CD8-positive, alpha-beta T cell (primary cell): ENCODE measurements at regions of chr18 and their contacts with region 1.

Region 1: GRCh38 chr18:62584241-62585120 is 61.7 kb downstream of the ZCCHC2 start:
- DNase-seq: peak; percentile 62 to 91 (median 83)
- ATAC-seq: peak; percentile 99
- H3K4me3 ChIP-seq: no peak overlapping the region
- H3K4me3 Mint-ChIP-seq: peak overlapping the region; percentile 33
- H3K27ac ChIP-seq: peak overlapping the region in 1 of 2 experiments; percentile 30
- H3K27ac Mint-ChIP-seq: peak overlapping the region; percentile 39
- H3K4me1 ChIP-seq: peaks cover 16% of the 10 kb centered on the region
- H3K4me1 Mint-ChIP-seq: peaks cover 29% of the 10 kb centered on the region
- H3K27me3 ChIP-seq: no peaks in the 10 kb centered on the region
- H3K27me3 Mint-ChIP-seq: no peaks in the 10 kb centered on the region
- CTCF ChIP-seq: peak; percentile 98

Region 2: DNA sequence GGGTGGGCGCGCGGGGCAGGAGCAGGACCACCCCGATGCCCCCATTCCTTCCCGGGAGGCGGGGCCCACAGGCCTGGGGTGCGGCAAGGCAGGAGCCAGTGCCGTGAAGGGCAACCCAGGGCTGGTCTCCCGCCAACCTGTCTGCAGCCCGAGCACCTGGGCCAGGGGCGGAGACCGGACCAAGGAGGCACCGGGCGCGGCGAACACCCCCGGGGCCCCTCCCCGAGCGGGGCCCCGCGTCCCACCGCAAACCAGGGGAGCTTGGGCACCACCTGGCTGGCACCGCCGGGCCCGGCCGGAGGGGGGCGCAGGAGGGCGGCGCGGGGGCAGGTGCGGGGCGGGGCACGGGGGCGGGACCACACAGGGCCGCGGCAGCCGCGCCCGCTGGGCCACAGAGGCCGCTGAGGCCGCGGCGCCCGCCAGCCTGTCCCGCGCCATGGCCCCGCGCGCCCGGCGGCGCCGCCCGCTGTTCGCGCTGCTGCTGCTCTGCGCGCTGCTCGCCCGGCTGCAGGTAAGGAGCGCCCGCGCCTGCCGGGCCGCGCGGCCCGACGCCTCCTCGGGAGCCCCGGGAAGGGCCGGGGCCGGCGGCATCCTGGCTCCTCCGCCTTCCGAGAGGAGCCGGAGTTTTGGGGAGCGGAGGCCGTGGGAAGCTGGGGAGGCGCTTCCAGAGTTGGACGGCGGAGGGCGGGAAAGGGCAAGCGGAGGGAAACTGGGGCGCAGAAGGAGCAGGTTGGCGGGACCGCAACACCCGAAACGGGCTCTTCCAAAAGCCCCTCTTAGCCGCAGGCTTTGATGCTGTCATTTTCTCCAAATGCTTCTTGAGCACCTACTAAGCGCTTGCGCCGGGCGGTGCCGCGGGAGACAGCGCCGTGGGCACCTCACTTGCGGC is 259.3 kb before region 1 on chr18 and contains the start of gene TNFRSF11A:
- CTCF ChIA-PET with region 1: no interaction called
- POLR2A ChIA-PET with region 1: no interaction called
- intact Hi-C with region 1: loop called (anchors 2 to 5 kb)
- DNase-seq: peak; percentile 35 to 69 (median 61)
- ATAC-seq: peak; percentile 90
- H3K4me3 ChIP-seq: peak within 1 kb of the TSS; percentile 45 to 51
- H3K4me3 Mint-ChIP-seq: peak within 1 kb of the TSS; percentile 80
- H3K27ac ChIP-seq: no peak within 1 kb of the TSS
- H3K27ac Mint-ChIP-seq: no peak within 1 kb of the TSS
- H3K4me1 ChIP-seq: peaks cover 24% of the 10 kb centered on the region
- H3K4me1 Mint-ChIP-seq: peaks cover 26% of the 10 kb centered on the region
- H3K27me3 ChIP-seq: peaks cover 25 to 27% of the 10 kb centered on the region in 2 experiments
- H3K27me3 Mint-ChIP-seq: peaks cover 71% of the 10 kb centered on the region
- CTCF ChIP-seq: peak; percentile 25
- total RNA-seq, gene TNFRSF11A: 0.03 to 0.28 TPM

Region 3: GRCh38 chr18:62445386-62445917 is 139.0 kb before region 1 on chr18:
- CTCF ChIA-PET with region 1: interaction called, 5 read pairs
- POLR2A ChIA-PET with region 1: no interaction called
- intact Hi-C with region 1: loop called (anchors 1 to 5 kb)
- DNase-seq: no peak
- ATAC-seq: no peak
- H3K4me3 ChIP-seq: no peak overlapping the region
- H3K4me3 Mint-ChIP-seq: no peak overlapping the region
- H3K27ac ChIP-seq: no peak overlapping the region
- H3K27ac Mint-ChIP-seq: no peak overlapping the region
- H3K4me1 ChIP-seq: no peaks in the 10 kb centered on the region
- H3K4me1 Mint-ChIP-seq: no peaks in the 10 kb centered on the region
- H3K27me3 ChIP-seq: no peaks in the 10 kb centered on the region
- H3K27me3 Mint-ChIP-seq: peaks cover 3% of the 10 kb centered on the region
- CTCF ChIP-seq: no peak

Region 4: GRCh38 chr18:62455222-62455621 is 129.3 kb before region 1 on chr18:
- CTCF ChIA-PET with region 1: interaction called, 12 read pairs
- POLR2A ChIA-PET with region 1: no interaction called
- intact Hi-C with region 1: no loop called
- DNase-seq: no peak
- ATAC-seq: no peak
- H3K4me3 ChIP-seq: no peak overlapping the region
- H3K4me3 Mint-ChIP-seq: no peak overlapping the region
- H3K27ac ChIP-seq: no peak overlapping the region
- H3K27ac Mint-ChIP-seq: no peak overlapping the region
- H3K4me1 ChIP-seq: no peaks in the 10 kb centered on the region
- H3K4me1 Mint-ChIP-seq: no peaks in the 10 kb centered on the region
- H3K27me3 ChIP-seq: no peaks in the 10 kb centered on the region
- H3K27me3 Mint-ChIP-seq: peaks cover 20% of the 10 kb centered on the region
- CTCF ChIP-seq: no peak

Region 5: GRCh38 chr18:62571648-62572047 is 12.8 kb before region 1 on chr18:
- CTCF ChIA-PET with region 1: interaction called, 16 read pairs
- POLR2A ChIA-PET with region 1: no interaction called
- intact Hi-C with region 1: no loop called
- DNase-seq: peak in 1 of 9 experiments; percentile 23
- ATAC-seq: no peak
- H3K4me3 ChIP-seq: no peak overlapping the region
- H3K4me3 Mint-ChIP-seq: no peak overlapping the region
- H3K27ac ChIP-seq: no peak overlapping the region
- H3K27ac Mint-ChIP-seq: no peak overlapping the region
- H3K4me1 ChIP-seq: no peaks in the 10 kb centered on the region
- H3K4me1 Mint-ChIP-seq: no peaks in the 10 kb centered on the region
- H3K27me3 ChIP-seq: no peaks in the 10 kb centered on the region
- H3K27me3 Mint-ChIP-seq: no peaks in the 10 kb centered on the region
- CTCF ChIP-seq: no peak

Region 6: DNA sequence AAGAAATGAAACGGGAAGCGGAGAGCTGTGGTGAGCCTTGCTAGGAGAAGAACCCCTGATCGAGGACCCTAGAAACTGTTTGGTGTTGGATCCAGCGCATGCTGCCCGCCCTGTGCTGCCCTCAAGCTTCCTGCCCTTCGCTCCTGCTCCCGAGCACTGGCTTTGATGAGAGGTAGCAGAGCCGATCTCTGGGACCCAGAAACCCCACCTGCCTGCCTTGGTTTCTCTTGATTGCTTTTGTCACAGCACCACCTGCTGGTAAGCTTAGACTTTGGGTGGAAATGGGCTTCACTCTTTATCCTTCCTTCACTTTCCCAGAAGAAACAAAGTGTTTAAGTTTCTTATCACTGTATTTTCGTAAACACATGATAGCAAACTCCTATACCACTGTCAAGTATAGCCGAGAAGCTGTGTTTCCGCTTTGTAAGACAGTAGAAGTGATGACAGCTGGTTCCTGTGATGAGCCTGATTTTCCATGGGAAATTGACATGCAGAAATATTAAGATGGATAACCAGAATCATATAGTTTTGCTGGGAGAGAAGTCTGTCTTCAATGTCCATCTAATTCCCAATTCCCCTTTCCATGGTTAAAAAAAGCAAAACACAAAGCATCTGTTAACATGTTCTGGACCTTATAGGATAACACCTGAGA is 398.2 kb after region 1 on chr18:
- CTCF ChIA-PET with region 1: interaction called, 24 read pairs
- POLR2A ChIA-PET with region 1: no interaction called
- intact Hi-C with region 1: loop called (anchors 1 to 2 kb)
- DNase-seq: peak; percentile 25 to 77 (median 57)
- ATAC-seq: peak; percentile 65
- H3K4me3 ChIP-seq: no peak overlapping the region
- H3K4me3 Mint-ChIP-seq: peak overlapping the region; percentile 62
- H3K27ac ChIP-seq: no peak overlapping the region
- H3K27ac Mint-ChIP-seq: no peak overlapping the region
- H3K4me1 ChIP-seq: no peaks in the 10 kb centered on the region
- H3K4me1 Mint-ChIP-seq: peaks cover 6% of the 10 kb centered on the region
- H3K27me3 ChIP-seq: no peaks in the 10 kb centered on the region
- H3K27me3 Mint-ChIP-seq: no peaks in the 10 kb centered on the region
- CTCF ChIP-seq: peak; percentile 70